ENCODE measurements at regions of chr3 and their contacts with region 1.

Region 1: GRCh38 chr3:106609666-106610301 is 741.0 kb upstream of the CBLB start:
- DNase-seq: peak; percentile 77
- ATAC-seq: peak; percentile 95
- H3K4me3 ChIP-seq: no peak overlapping the region
- H3K27ac ChIP-seq: peak overlapping the region; percentile 55
- H3K4me1 ChIP-seq: peaks cover 5% of the 10 kb centered on the region
- H3K27me3 ChIP-seq: no peaks in the 10 kb centered on the region
- CTCF ChIP-seq: peak; percentile 83 to 87 (median 86)
- EP300 ChIP-seq: no peak
- POLR2A ChIP-seq: no peak
- RAD21 ChIP-seq: peak; percentile 99

Region 2: DNA sequence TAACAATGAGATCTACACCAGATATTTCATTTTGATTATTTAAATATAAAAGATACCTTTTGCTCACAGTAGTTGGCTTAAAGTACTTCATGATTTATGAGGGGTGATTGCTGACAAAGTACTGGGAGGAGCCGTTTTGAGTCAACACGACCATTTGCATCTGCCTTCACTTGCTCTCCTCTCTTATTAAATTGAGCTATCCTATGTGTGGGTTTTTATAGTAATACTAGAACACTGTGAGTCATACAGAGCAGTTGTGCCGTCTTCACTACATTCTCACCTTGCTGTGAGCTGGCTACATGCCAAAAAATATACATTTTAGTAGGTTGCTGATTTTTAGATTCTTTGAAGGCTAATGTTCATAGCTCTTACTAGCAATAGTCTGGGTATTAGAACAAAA is 1081.8 kb before region 1 on chr3:
- CTCF ChIA-PET with region 1: interaction called, 11 read pairs
- POLR2A ChIA-PET with region 1: no interaction called
- RAD21 ChIA-PET with region 1: interaction called, 7 read pairs
- SMC1A ChIA-PET with region 1: interaction called, 13 read pairs
- in situ Hi-C with region 1: no loop called
- intact Hi-C with region 1: no loop called
- DNase-seq: no peak
- ATAC-seq: peak; percentile 93
- H3K4me3 ChIP-seq: no peak overlapping the region
- H3K27ac ChIP-seq: no peak overlapping the region
- H3K4me1 ChIP-seq: no peaks in the 10 kb centered on the region
- H3K27me3 ChIP-seq: no peaks in the 10 kb centered on the region
- CTCF ChIP-seq: no peak
- EP300 ChIP-seq: no peak
- POLR2A ChIP-seq: no peak
- RAD21 ChIP-seq: no peak

Region 3: GRCh38 chr3:105686278-105686897 is 923.4 kb before region 1 on chr3:
- CTCF ChIA-PET with region 1: interaction called, 59 read pairs
- POLR2A ChIA-PET with region 1: no interaction called
- RAD21 ChIA-PET with region 1: interaction called, 48 read pairs
- SMC1A ChIA-PET with region 1: interaction called, 74 read pairs
- in situ Hi-C with region 1: no loop called
- intact Hi-C with region 1: loop called (anchors 1 kb)
- DNase-seq: no peak
- ATAC-seq: peak; percentile 46
- H3K4me3 ChIP-seq: no peak overlapping the region
- H3K27ac ChIP-seq: no peak overlapping the region
- H3K4me1 ChIP-seq: no peaks in the 10 kb centered on the region
- H3K27me3 ChIP-seq: no peaks in the 10 kb centered on the region
- CTCF ChIP-seq: peak; percentile 57 to 69 (median 65)
- EP300 ChIP-seq: no peak
- POLR2A ChIP-seq: no peak
- RAD21 ChIP-seq: peak; percentile 83

Region 4: GRCh38 chr3:106004137-106004681 is 605.6 kb before region 1 on chr3:
- CTCF ChIA-PET with region 1: no interaction called
- POLR2A ChIA-PET with region 1: no interaction called
- RAD21 ChIA-PET with region 1: no interaction called
- SMC1A ChIA-PET with region 1: no interaction called
- in situ Hi-C with region 1: no loop called
- intact Hi-C with region 1: loop called (anchors 10 kb)
- DNase-seq: no peak
- ATAC-seq: no peak
- H3K4me3 ChIP-seq: no peak overlapping the region
- H3K27ac ChIP-seq: no peak overlapping the region
- H3K4me1 ChIP-seq: no peaks in the 10 kb centered on the region
- H3K27me3 ChIP-seq: no peaks in the 10 kb centered on the region
- CTCF ChIP-seq: no peak
- EP300 ChIP-seq: no peak
- POLR2A ChIP-seq: no peak
- RAD21 ChIP-seq: no peak

Region 5: GRCh38 chr3:106299300-106300098 is 310.3 kb before region 1 on chr3:
- CTCF ChIA-PET with region 1: interaction called, 15 read pairs
- POLR2A ChIA-PET with region 1: no interaction called
- RAD21 ChIA-PET with region 1: interaction called, 5 read pairs
- SMC1A ChIA-PET with region 1: interaction called, 7 read pairs
- in situ Hi-C with region 1: no loop called
- intact Hi-C with region 1: loop called (anchors 1 kb)
- DNase-seq: peak; percentile 90
- ATAC-seq: peak; percentile 71
- H3K4me3 ChIP-seq: no peak overlapping the region
- H3K27ac ChIP-seq: peak overlapping the region; percentile 92
- H3K4me1 ChIP-seq: peaks cover 47% of the 10 kb centered on the region
- H3K27me3 ChIP-seq: no peaks in the 10 kb centered on the region
- CTCF ChIP-seq: no peak
- EP300 ChIP-seq: peak; percentile 73 to 79; a peak in 2 of 4 replicates
- POLR2A ChIP-seq: no peak
- RAD21 ChIP-seq: 0 out of 2 replicates have a peak, but pooled peaks have one; percentile 6

Region 6: GRCh38 chr3:106573606-106574005 is 36.2 kb before region 1 on chr3:
- CTCF ChIA-PET with region 1: interaction called, 13 read pairs
- POLR2A ChIA-PET with region 1: no interaction called
- RAD21 ChIA-PET with region 1: interaction called, 4 read pairs
- SMC1A ChIA-PET with region 1: interaction called, 6 read pairs
- in situ Hi-C with region 1: no loop called
- intact Hi-C with region 1: no loop called
- DNase-seq: no peak
- ATAC-seq: no peak
- H3K4me3 ChIP-seq: no peak overlapping the region
- H3K27ac ChIP-seq: no peak overlapping the region
- H3K4me1 ChIP-seq: no peaks in the 10 kb centered on the region
- H3K27me3 ChIP-seq: no peaks in the 10 kb centered on the region
- CTCF ChIP-seq: no peak
- EP300 ChIP-seq: no peak
- POLR2A ChIP-seq: no peak
- RAD21 ChIP-seq: no peak

Region 7: DNA sequence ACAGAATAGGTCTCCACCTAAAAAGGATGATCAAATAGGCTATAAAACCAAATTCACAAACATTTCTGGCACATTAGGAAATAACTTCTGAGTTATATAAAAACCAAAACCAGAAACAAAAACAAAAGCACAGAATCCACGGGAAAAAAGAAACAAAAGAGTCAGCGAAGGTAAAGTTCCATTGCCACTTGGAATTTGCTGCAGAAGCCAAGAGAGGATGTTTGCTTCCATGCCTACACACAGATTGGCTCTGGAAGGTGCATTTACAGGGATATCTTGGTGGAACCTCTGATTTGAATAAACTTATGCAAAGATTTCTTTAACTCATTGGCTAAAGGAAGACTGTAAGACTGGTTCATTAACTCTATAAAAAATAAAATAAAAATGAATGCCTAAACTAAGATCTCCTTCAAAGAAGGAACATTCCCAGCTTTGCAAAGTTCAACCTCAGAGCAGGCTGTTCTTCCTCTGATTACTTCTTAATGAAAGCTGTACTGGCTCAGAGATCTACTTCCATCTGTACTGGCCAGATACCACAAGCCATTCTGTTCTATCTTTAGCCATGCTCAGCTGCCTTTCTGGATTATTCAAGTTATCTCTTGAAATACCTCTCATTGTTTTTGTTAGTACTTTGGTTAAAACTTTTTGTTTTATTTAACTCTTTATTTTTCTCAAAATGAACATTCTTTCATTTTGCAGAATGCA is 229.9 kb after region 1 on chr3:
- CTCF ChIA-PET with region 1: no interaction called
- POLR2A ChIA-PET with region 1: no interaction called
- RAD21 ChIA-PET with region 1: no interaction called
- SMC1A ChIA-PET with region 1: no interaction called
- in situ Hi-C with region 1: no loop called
- intact Hi-C with region 1: no loop called
- DNase-seq: no peak
- ATAC-seq: no peak
- H3K4me3 ChIP-seq: no peak overlapping the region
- H3K27ac ChIP-seq: no peak overlapping the region
- H3K4me1 ChIP-seq: no peaks in the 10 kb centered on the region
- H3K27me3 ChIP-seq: no peaks in the 10 kb centered on the region
- CTCF ChIP-seq: no peak
- EP300 ChIP-seq: no peak
- POLR2A ChIP-seq: no peak
- RAD21 ChIP-seq: no peak